Mammary epithelial cell (primary cell): ENCODE measurements at regions of chr17 and their contacts with region 1.

Region 1: DNA sequence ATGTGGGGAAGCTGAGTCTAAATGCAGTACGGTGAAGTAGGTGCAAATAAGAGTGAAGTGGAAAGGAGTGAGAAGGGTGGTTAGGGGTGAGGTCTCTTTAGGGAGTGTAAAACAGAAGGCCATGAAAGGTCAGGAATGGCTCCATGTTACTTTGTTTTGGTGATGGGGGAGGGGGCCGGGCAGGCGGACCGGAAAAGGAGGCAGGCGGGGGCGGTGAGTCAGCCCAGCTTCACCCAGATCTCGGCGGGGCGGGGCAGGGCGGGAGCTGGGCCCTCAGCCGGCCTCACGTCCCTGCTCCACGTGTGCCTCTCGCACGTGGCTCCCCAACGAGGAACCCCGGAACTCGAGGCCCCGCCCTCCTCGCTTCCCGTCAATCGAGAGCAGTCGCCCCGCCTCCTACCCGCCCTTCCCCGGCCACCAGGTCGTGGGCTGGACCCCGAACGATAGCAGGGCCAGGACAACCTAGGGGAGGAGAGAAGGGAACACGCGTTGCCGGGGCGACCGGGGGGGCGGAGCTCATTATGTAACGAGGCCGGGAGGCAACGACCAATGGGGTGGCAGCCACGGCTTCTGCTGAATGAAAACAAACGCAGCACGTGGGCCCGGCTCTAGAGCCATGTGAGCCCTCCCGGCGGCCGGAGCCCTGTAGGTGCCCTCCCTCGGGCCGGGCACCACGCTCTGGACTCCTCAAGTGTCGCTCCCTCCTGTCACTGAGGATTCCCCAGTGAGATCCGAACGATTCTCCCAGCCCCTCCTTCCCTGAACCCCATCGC is 1.4 kb downstream of the NR1D1 start:
- DNase-seq: peak; percentile 100
- H3K4me3 ChIP-seq: peak overlapping the region; percentile 75 to 99 (median 87)
- H3K27ac ChIP-seq: peak overlapping the region; percentile 96
- H3K4me1 ChIP-seq: peaks cover 31% of the 10 kb centered on the region
- H3K27me3 ChIP-seq: no peaks in the 10 kb centered on the region
- CTCF ChIP-seq: no peak

Region 2: DNA sequence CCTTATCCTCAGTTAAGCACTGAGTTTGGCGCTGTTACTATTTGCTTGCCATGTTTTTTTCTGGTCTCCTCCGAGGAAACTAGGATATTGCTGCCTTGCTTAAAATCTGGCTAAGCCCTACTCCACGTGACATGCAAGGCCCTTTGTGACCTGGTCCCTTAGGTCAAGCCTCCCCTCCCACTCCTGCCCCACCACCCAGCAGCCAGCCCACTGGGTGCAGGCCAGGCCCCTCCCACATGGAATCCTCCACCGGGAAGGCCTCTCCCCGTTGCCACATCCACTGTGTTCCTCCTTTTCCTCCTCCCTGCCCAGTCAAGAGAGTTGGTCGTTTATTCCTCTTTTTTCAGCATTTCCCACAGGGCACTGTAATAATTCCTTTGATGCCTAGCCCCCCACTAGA is 102.2 kb before region 1 on chr17:
- CTCF ChIA-PET with region 1: no interaction called
- dilution Hi-C with region 1: no loop called
- in situ Hi-C with region 1: no loop called
- intact Hi-C with region 1: no loop called
- DNase-seq: no peak
- H3K4me3 ChIP-seq: no peak overlapping the region
- H3K27ac ChIP-seq: no peak overlapping the region
- H3K4me1 ChIP-seq: no peaks in the 10 kb centered on the region
- H3K27me3 ChIP-seq: no peaks in the 10 kb centered on the region
- CTCF ChIP-seq: no peak

Region 3: DNA sequence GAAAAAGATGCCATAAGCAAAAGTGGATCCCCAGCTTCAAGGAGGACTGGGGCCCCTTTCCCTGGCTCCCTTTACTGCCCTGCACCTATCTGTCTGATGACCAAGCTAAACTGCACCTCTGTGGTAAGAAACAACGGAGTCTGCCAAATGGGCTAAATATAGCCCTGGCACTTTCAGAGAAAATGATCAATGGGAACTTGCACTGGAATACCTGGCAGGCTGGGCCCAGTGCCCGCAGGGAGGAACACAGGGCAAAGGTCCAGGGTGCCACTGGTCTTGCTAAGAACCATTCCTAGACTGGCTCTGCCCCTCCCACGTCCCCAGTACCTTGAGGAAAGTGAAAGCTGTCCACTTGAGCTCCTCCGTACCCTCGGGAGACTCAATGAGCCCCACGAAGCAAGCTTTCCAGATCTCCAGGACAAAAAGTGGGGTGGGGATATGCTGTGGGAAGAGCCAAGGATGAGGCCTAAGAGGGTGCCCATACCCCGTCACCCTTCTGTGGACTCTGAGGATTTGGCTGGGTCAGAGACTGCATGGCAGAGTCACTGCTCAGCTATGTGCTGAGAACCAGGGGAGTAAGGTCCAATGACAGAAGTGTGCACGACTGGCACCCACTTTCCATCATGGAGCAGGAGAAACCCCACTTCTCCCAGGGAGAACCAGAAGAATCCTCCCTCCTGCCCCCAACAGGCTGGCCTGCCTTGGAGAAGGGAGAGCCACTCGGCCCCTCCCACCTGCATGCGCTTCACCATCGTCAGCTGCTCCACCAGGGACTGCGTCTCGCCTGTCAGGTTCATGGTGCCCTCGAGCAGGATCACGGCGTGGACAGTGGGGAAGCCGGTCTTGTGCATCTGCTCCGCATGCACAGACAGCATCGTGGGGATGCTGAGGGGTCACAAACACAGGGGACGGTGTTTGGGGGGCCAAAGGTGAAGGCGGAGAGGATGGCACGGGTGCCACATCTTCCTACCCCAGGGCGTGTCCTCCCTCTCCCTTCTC is 66.4 kb before region 1 on chr17:
- CTCF ChIA-PET with region 1: interaction called, 6 read pairs
- dilution Hi-C with region 1: loop called (anchors 5 kb)
- in situ Hi-C with region 1: no loop called
- intact Hi-C with region 1: no loop called
- DNase-seq: no peak
- H3K4me3 ChIP-seq: no peak overlapping the region
- H3K27ac ChIP-seq: peak overlapping the region; percentile 0
- H3K4me1 ChIP-seq: peaks cover 21% of the 10 kb centered on the region
- H3K27me3 ChIP-seq: no peaks in the 10 kb centered on the region
- CTCF ChIP-seq: no peak

Region 4: DNA sequence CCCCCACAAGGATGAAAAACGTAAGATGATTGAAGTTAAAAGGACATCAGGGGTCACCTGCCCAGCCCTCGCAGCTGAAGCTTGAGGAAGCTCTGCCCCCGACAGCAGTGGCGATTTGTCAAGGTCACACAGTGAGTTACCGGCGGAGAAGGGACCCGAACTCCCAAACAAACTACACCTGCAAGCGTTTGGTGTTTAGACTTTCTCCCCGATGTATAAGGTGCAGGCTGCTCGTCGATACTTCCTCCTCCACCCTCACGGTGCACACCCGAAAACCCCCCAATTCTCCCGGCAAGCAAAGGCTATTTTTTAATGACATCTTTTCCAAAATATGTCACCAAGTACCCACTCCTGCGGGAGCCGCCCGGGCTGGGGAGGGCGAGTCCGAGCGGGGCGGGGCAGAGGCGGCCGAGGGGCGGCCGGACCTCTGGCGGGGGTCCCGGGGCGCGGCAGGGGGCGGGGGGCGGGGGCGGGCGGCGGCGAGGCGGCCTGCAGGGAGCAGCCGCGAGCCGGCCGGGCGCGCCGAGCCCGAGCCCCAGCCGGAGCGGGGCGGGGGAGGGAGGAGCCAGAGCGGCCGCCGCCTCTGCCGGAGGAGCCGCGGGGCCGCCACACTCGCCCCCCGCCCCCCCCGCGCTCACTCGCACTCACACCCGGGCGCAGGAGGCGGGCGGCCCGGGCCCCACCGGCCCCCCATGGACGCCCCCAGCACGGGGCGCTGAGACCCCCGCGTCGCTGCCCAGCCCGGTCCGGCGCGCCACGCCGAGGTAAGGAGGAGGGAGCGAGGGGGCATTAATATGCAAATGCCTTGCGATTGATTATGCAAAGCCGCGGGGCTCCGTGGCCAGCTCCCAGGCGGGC is 36.5 kb before region 1 on chr17 and contains the start of gene THRA:
- CTCF ChIA-PET with region 1: no interaction called
- dilution Hi-C with region 1: no loop called
- in situ Hi-C with region 1: no loop called
- intact Hi-C with region 1: loop called (anchors 5 kb)
- DNase-seq: no peak
- H3K4me3 ChIP-seq: peak within 1 kb of the TSS; percentile 94 to 96 (median 94)
- H3K27ac ChIP-seq: peak within 1 kb of the TSS; percentile 52
- H3K4me1 ChIP-seq: peaks cover 20% of the 10 kb centered on the region
- H3K27me3 ChIP-seq: no peaks in the 10 kb centered on the region
- CTCF ChIP-seq: peak in 1 of 2 donors; percentile 13
- total RNA-seq, gene THRA: 10.8 to 11.7 TPM

Region 5: GRCh38 chr17:40075201-40075941 is 23.7 kb before region 1 on chr17:
- CTCF ChIA-PET with region 1: no interaction called
- dilution Hi-C with region 1: no loop called
- in situ Hi-C with region 1: no loop called
- intact Hi-C with region 1: loop called (anchors 1 kb)
- DNase-seq: peak; percentile 30
- H3K4me3 ChIP-seq: no peak overlapping the region
- H3K27ac ChIP-seq: no peak overlapping the region
- H3K4me1 ChIP-seq: peaks cover 31% of the 10 kb centered on the region
- H3K27me3 ChIP-seq: no peaks in the 10 kb centered on the region
- CTCF ChIP-seq: peak; percentile 77 to 94

Region 6: DNA sequence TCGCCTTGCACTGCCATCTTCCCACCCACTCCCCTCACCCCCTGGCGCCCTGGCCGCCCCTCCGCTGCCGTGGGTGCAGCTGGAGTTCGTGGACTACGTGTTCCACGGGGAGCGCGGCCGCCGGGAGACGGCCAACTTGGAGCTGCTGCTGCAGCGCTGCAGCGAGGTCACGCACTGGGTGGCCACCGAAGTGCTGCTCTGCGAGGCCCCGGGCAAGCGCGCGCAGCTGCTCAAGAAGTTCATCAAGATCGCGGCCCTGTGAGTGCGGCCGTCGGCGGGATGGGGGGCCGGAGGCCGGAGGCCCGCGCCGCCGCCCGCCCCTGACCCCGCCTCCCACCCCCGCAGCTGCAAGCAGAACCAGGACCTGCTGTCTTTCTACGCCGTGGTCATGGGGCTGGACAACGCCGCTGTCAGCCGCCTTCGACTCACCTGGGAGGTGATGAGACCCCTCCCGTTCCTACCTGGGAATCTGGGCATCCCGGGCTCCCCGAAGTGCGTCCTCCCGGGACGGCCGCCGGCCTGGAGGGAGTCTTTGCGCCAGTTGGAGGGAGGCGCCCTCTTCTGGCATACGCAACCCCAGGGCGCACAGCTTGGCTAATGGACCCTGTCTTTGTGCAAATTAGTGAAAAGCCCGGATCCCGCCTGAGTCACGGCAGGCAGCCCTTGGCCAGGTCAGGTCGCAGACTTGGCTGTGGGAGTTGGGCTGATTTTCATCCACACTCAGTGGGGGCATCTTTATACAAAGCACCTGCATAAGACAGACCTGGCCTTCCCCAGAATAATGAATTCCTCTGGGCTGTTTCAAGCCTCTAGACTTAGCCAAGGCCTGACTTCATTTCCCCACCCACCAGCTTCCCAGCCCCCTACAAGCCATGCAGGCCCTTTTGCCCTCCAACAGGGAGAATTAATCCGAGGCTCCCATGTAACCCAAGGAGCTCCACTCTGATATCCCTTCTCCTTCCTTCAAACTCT is 92.5 kb after region 1 on chr17:
- CTCF ChIA-PET with region 1: no interaction called
- dilution Hi-C with region 1: loop called (anchors 5 kb)
- in situ Hi-C with region 1: no loop called
- intact Hi-C with region 1: no loop called
- DNase-seq: peak; percentile 75
- H3K4me3 ChIP-seq: peak overlapping the region in 2 of 3 experiments; percentile 37 to 41
- H3K27ac ChIP-seq: no peak overlapping the region
- H3K4me1 ChIP-seq: peaks cover 24% of the 10 kb centered on the region
- H3K27me3 ChIP-seq: no peaks in the 10 kb centered on the region
- CTCF ChIP-seq: peak; percentile 66 to 81